ENCODE measurements at regions of chr2 and their contacts with region 1.

Region 1: DNA sequence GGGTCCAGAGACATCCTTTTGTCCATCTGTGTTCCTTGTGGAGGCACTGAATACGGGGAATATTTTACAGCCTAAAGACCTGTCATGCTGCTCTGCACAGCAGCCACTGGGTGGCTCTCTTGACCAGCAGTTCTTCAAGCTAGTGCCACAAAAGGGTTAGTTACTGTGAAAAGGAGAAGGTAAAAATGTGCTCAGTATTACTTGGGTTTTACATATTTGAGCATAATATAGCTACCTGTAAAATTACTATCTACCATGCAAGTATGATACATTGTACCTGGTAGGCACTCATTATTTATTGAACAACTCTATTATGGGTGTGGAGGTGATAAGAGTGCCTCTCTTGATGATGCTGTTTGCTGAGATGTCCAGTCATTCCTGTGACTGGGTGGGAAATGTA is 23.6 kb downstream of the FZD5 start:
- DNase-seq: peak; percentile 43
- H3K4me3 ChIP-seq: no peak overlapping the region
- H3K27ac ChIP-seq: no peak overlapping the region
- H3K4me1 ChIP-seq: no peaks in the 10 kb centered on the region
- H3K27me3 ChIP-seq: no peaks in the 10 kb centered on the region
- CTCF ChIP-seq: peak; percentile 56 to 89 (median 82)
- POLR2A ChIP-seq: no peak

Region 2: DNA sequence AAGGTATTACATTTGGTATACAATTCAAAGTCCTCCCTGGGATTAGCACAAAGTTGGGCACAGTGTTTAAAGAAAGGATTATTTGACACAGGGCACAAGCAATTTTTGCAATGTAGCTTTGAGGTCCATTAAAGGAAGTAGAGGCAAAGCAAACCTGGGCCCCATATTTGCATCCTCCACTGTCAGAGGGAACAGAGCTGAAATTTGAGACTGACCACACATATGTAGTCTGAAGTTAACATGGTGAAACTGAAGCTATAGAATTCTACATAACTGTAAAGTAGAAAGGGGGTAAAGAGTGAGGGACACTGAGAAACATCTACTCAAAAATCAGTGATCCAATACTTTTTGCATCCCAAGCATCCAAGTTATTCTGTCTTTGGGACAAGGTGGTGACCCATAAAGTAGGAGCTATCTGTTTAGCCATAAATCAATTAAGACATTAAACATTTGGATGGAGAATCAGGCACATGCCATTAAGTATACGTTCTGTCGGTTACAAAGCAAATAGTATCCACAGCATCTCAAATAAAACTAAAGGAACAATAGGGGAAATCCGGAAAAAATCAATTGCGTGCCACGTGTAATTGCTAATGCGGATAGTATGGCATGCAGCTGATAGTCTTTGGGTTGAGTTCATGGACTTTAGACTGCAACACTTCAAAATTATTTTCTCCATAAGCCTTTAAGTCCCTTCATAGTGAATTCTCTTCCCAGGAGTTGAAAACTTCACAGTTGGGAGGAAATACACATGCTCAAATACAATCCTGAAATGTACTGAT is 206.6 kb after region 1 on chr2:
- intact Hi-C with region 1: no loop called
- DNase-seq: no peak
- H3K4me3 ChIP-seq: no peak overlapping the region
- H3K27ac ChIP-seq: no peak overlapping the region
- H3K4me1 ChIP-seq: no peaks in the 10 kb centered on the region
- H3K27me3 ChIP-seq: no peaks in the 10 kb centered on the region
- CTCF ChIP-seq: no peak
- POLR2A ChIP-seq: no peak

Region 3: DNA sequence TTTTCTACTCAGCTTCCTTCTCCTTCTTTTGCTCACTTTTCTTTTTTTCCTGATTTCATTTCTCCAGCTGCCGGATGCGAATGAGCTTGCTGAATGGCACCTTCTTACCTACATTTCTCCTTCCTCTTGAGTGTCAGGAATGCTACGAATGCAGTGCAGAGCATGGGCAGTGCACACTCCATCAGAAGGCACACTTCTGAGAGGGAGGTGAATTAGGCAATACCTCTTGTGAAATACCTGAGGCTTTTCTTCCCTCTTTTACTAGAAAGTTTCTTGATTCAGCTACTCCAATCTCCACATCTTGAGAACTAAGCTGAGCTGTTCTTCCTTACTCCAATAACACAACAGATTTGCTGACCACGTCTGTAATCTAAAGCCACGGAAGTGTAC is 228.1 kb after region 1 on chr2:
- intact Hi-C with region 1: loop called (anchors 5 kb)
- DNase-seq: no peak
- H3K4me3 ChIP-seq: no peak overlapping the region
- H3K27ac ChIP-seq: no peak overlapping the region
- H3K4me1 ChIP-seq: peaks cover 4% of the 10 kb centered on the region
- H3K27me3 ChIP-seq: no peaks in the 10 kb centered on the region
- CTCF ChIP-seq: no peak
- POLR2A ChIP-seq: no peak

Region 4: GRCh38 chr2:208040199-208041171 is 294.4 kb after region 1 on chr2:
- intact Hi-C with region 1: loop called (anchors 2 kb)
- DNase-seq: peak; percentile 39
- H3K4me3 ChIP-seq: no peak overlapping the region
- H3K27ac ChIP-seq: no peak overlapping the region
- H3K4me1 ChIP-seq: no peaks in the 10 kb centered on the region
- H3K27me3 ChIP-seq: no peaks in the 10 kb centered on the region
- CTCF ChIP-seq: peak in 3 of 4 experiments; percentile 57 to 73 (median 62)
- POLR2A ChIP-seq: no peak

Region 5: GRCh38 chr2:208072250-208072892 is 326.2 kb after region 1 on chr2:
- intact Hi-C with region 1: loop called (anchors 5 kb)
- DNase-seq: peak; percentile 63
- H3K4me3 ChIP-seq: no peak overlapping the region
- H3K27ac ChIP-seq: no peak overlapping the region
- H3K4me1 ChIP-seq: no peaks in the 10 kb centered on the region
- H3K27me3 ChIP-seq: no peaks in the 10 kb centered on the region
- CTCF ChIP-seq: peak; percentile 43 to 69 (median 62)
- POLR2A ChIP-seq: no peak

Region 6: DNA sequence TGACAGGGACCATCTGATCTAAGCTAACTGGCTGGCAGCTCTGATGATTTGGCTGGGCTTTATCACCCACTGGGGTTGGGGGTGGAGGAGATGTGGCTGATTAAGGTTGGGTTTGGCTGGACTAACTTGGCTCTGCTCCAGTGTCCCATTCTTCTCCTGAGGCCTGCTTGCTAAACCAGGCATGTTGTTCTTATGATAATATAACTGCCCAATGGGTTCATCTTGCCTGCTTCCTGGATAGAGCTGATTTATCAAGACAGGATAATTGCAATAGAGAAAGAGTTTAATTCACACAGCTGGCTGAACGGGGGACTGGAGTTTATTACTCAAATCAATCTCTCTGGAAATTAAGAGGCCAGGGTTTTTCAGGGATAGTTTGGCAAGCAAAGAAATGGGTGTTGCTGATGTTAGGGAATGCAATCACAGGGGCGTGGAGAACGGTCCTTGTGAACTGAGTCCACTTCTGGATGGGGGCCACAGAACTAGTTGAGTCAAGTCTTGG is 810.9 kb after region 1 on chr2:
- intact Hi-C with region 1: no loop called
- DNase-seq: no peak
- H3K4me3 ChIP-seq: no peak overlapping the region
- H3K27ac ChIP-seq: no peak overlapping the region
- H3K4me1 ChIP-seq: no peaks in the 10 kb centered on the region
- H3K27me3 ChIP-seq: no peaks in the 10 kb centered on the region
- CTCF ChIP-seq: no peak
- POLR2A ChIP-seq: no peak

Measured in prostate gland (tissue), 2 donors.